ENCODE measurements at regions of chr4 and their contacts with region 1.

Region 1: DNA sequence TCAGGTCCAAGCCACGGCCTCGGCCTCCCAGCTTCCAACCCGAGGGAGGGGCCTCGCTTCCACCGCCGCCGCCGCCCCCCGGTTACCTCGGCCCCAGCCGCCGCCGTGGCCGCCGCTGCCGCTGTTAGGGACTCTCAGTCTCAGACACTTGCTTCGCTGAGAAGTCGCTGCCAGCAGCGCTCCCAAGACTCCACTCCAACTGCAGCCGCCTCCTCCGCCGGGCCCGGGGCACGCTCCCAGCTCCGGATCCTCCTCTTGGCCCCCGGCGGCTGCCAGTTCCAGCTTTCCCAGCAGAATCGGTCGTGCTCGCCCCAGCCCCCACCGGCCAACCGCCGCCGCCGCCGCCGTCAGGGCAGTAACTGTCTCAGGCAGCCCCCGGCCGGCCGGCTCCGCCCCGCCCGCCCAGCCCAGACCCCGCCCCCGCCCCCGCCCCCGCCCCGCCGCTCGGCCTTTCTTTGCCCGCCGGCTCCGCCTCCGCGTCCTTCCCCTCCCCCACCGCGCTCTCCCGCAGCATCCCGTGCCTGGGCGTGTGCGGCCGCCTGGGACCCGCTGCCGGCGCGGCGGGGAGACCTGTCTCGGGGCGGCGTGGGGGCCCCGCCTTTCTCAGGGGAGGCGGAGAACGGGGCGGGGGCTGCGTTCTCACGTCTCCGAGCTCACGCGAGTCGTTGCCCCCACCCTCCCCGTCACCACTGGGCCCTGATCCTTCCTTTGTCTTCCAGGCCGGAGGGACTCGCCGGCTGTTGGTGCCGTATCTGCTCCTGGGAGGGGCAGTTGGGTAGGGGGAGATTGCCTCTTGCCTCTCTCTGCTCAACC is at the start of gene ANKRD50:
- DNase-seq: peak; percentile 66 to 94
- H3K4me3 ChIP-seq: peak within 1 kb of the TSS; percentile 72 to 98
- H3K27ac ChIP-seq: peak within 1 kb of the TSS; percentile 90 to 97
- H3K4me1 ChIP-seq: peaks cover 0 to 18% of the 10 kb centered on the region in 2 donors
- H3K27me3 ChIP-seq: no peaks in the 10 kb centered on the region
- CTCF ChIP-seq: no peak
- total RNA-seq, gene ANKRD50: 26.9 TPM

Region 2: GRCh38 chr4:123731035-123731434 is 981.5 kb before region 1 on chr4:
- intact Hi-C with region 1: no loop called
- DNase-seq: no peak
- H3K4me3 ChIP-seq: no peak overlapping the region
- H3K27ac ChIP-seq: no peak overlapping the region
- H3K4me1 ChIP-seq: no peaks in the 10 kb centered on the region
- H3K27me3 ChIP-seq: no peaks in the 10 kb centered on the region
- CTCF ChIP-seq: no peak

Region 3: DNA sequence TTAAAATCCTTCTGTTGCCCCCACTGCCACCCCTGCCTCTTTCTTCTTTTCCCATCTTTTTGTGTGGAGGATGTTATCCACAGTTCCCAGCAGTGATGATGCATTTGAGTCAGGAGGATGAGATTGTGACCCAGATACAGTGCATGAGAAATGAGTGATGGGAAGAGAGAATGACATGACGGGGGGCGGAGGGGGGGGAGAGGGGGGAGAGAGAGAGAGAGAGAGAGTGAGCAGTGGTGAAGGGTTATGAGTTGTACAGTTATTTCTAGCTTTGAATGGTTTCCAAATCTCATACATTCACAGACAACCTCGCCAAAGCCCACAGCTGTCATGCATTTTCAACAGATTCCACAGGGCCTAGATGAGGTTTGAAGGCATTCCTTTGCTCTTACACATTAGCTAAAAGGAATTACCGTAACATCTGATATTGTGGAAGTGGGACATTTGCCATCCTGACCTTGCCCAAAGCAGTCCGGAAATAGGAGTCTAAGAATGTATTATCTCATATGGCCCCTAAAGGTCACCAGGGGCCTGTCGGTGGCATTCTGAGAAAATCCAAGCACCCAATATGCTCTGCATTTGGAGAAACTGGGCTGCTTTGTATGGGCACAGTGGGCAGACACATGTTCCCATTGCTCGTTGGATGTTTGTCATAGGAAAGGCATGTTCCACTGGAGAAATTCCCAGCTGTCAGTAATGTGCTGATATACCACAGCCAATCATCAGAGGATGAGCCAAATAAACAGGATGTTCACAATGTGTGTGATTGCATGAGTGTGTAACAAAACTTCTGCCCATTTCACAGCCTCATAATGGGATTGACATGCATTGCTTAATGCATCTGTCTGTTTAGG is 880.2 kb before region 1 on chr4:
- intact Hi-C with region 1: loop called (anchors 10 kb)
- DNase-seq: peak in 1 of 2 donors; percentile 82
- H3K4me3 ChIP-seq: no peak overlapping the region
- H3K27ac ChIP-seq: peak overlapping the region; percentile 56 to 76
- H3K4me1 ChIP-seq: peaks cover 3 to 19% of the 10 kb centered on the region in 2 donors
- H3K27me3 ChIP-seq: no peaks in the 10 kb centered on the region
- CTCF ChIP-seq: no peak

Region 4: GRCh38 chr4:124863107-124863506 is 150.5 kb after region 1 on chr4:
- intact Hi-C with region 1: loop called (anchors 5 kb)
- DNase-seq: no peak
- H3K4me3 ChIP-seq: no peak overlapping the region
- H3K27ac ChIP-seq: no peak overlapping the region
- H3K4me1 ChIP-seq: peaks cover 0 to 4% of the 10 kb centered on the region in 2 donors
- H3K27me3 ChIP-seq: no peaks in the 10 kb centered on the region
- CTCF ChIP-seq: no peak

Region 5: GRCh38 chr4:124936427-124936826 is 223.8 kb after region 1 on chr4:
- intact Hi-C with region 1: loop called (anchors 2 kb)
- DNase-seq: peak in 1 of 2 donors; percentile 67
- H3K4me3 ChIP-seq: no peak overlapping the region
- H3K27ac ChIP-seq: peak overlapping the region in 1 of 2 donors; percentile 0
- H3K4me1 ChIP-seq: peaks cover 0 to 7% of the 10 kb centered on the region in 2 donors
- H3K27me3 ChIP-seq: no peaks in the 10 kb centered on the region
- CTCF ChIP-seq: no peak

Region 6: DNA sequence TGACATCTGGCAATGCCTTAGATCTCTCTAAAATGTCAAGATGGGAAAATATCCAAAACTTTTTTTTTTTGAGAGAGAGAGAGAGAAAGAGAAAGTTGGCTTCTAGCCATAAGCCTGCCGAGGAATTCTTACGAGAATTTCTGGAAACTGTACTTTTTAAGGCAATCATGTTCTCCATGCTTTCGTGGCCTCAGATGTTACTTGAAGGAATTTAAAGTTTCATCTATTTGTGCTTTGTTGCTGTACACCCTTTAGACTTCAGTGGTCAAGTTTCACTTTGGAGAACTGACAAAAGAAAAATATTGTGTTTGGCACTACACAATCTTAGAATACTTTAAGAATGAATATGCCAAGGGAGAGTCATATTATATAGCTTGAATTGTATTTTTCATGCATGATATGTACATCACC is 656.1 kb after region 1 on chr4:
- intact Hi-C with region 1: loop called (anchors 5 kb)
- DNase-seq: no peak
- H3K4me3 ChIP-seq: peak overlapping the region; percentile 49 to 53
- H3K27ac ChIP-seq: peak overlapping the region; percentile 55 to 65
- H3K4me1 ChIP-seq: peaks cover 0 to 11% of the 10 kb centered on the region in 2 donors
- H3K27me3 ChIP-seq: no peaks in the 10 kb centered on the region
- CTCF ChIP-seq: no peak

Measured in ascending aorta (tissue), 2 donors.